Activated naive CD4-positive, alpha-beta T cell treated with anti-CD3 and anti-CD28 coated beads for 36 hours (primary cell): ENCODE measurements at regions of chr1 and their contacts with region 1.

Region 1: DNA sequence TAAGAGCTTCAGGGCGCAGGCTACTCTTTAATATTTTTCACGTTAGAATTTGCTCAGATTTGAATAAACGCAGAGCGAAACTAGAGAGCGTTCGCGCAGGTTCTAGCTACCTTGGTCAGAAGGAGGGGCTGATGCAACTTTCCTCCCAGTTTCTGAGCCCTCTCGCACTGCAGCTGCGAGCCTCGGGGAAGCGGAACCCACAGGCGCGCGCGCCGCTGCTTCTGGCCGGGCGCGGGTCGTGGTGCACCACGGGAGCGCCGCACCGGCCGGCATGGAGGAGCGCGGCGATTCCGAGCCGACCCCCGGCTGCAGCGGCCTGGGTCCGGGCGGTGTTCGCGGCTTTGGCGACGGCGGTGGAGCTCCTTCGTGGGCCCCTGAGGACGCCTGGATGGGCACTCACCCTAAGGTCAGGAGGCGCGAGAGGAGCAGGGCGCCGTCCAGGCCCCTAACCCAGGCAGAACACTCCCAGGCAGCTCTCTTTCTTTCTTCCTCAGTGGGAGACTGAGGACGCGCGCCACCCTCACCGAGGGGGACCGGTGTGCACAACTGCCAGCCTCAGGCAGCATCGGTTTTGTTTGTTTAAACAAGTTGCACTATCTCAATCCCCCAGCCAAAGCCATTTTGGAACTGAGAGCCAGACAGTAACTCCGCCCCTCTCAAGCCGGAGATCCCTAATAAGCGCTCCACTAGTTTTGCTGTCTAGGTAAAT is at the start of gene TSEN15:
- DNase-seq: peak; percentile 84
- H3K4me3 Mint-ChIP-seq: peak within 1 kb of the TSS; percentile 96
- H3K27ac Mint-ChIP-seq: peak within 1 kb of the TSS; percentile 96
- H3K4me1 Mint-ChIP-seq: peaks cover 34% of the 10 kb centered on the region
- H3K27me3 Mint-ChIP-seq: peaks cover 5% of the 10 kb centered on the region
- total RNA-seq, gene TSEN15: 52.6 to 57.6 TPM

Region 2: DNA sequence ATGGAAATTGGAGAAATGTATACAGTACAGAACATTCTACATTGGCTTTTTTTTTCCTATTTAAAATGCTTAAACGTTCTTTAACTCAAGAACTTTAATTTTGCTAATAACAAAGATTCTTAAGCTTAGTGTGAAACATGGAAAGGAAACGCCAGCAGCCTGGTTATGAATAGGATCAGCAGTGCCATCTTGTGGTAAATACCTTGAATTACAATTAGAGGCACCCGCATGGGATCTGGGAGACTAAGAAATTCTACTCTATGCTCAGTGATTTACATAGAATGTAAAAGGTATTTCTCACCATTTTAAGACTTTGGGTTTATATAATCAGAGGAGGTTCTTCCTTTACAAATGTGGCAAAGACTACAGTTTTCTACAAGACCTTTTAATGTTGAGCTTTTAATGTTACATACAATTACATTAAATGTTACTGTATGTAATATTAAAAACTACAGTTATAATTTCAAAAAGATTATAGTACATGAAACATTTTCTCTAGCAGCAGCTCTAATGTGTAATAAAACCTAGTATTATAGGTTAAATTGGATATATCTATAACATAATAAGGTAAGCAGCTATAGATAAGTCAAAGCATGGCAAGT is 366.4 kb before region 1 on chr1:
- CTCF ChIA-PET with region 1: interaction called, 3 read pairs
- intact Hi-C with region 1: loop called (anchors 10 kb)
- DNase-seq: peak; percentile 41
- H3K4me3 Mint-ChIP-seq: no peak overlapping the region
- H3K27ac Mint-ChIP-seq: no peak overlapping the region
- H3K4me1 Mint-ChIP-seq: peaks cover 8% of the 10 kb centered on the region
- H3K27me3 Mint-ChIP-seq: no peaks in the 10 kb centered on the region

Region 3: DNA sequence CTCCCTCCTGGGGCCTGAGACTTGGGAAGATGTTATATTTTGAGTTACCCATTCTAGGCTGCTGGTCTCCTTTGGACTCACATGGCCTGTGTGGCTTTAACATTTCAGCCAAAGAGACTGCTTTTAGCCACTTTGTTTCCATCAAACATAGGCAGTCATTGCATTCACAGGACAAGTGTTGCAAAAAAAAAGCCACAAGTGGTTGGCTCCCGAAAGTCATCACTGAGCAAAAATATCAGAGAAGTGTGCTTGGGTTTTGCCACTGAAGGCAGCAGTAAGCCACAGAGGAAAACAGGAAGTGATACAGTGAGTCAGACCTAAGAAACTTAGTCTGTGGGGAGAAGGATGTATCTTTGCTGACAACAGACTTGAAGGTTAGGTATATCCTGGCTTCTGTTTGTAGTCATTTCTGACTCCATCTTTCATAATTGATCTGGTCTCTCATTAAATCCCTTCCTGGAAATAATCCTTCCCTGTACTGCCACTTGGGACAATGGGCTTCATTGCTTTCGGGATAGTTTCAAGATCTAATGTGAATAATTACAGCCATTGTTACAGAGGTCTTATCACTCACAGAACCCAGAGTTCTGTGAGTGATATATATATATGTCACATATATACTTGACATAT is 95.0 kb before region 1 on chr1:
- CTCF ChIA-PET with region 1: no interaction called
- intact Hi-C with region 1: loop called (anchors 1 kb)
- DNase-seq: peak; percentile 71
- H3K4me3 Mint-ChIP-seq: no peak overlapping the region
- H3K27ac Mint-ChIP-seq: peak overlapping the region; percentile 86
- H3K4me1 Mint-ChIP-seq: no peaks in the 10 kb centered on the region
- H3K27me3 Mint-ChIP-seq: no peaks in the 10 kb centered on the region

Region 4: DNA sequence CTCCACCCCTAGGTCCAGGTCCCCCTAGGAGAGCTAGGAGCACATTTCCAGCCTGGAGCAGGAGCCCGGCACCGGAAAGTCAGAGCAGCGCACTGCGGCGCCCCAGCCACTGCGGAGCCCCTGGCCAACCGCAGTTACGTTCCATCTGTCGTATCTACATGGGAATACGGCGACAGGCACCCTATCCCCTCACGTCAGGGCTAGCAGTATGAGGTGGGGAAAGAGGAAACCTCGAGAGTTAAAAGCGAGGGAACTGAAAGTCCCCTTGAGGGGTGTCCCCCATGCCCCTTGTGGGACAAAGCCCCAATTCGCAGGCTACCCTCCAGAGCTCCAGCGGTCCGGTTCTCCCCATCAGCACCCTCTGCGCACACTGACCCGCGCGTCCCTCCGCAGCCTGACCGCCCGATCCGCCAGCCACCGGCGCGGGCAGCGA is 15.1 kb before region 1 on chr1:
- CTCF ChIA-PET with region 1: no interaction called
- intact Hi-C with region 1: loop called (anchors 1 kb)
- DNase-seq: peak; percentile 23
- H3K4me3 Mint-ChIP-seq: peak overlapping the region; percentile 58
- H3K27ac Mint-ChIP-seq: no peak overlapping the region
- H3K4me1 Mint-ChIP-seq: peaks cover 15% of the 10 kb centered on the region
- H3K27me3 Mint-ChIP-seq: peaks cover 68% of the 10 kb centered on the region

Region 5: DNA sequence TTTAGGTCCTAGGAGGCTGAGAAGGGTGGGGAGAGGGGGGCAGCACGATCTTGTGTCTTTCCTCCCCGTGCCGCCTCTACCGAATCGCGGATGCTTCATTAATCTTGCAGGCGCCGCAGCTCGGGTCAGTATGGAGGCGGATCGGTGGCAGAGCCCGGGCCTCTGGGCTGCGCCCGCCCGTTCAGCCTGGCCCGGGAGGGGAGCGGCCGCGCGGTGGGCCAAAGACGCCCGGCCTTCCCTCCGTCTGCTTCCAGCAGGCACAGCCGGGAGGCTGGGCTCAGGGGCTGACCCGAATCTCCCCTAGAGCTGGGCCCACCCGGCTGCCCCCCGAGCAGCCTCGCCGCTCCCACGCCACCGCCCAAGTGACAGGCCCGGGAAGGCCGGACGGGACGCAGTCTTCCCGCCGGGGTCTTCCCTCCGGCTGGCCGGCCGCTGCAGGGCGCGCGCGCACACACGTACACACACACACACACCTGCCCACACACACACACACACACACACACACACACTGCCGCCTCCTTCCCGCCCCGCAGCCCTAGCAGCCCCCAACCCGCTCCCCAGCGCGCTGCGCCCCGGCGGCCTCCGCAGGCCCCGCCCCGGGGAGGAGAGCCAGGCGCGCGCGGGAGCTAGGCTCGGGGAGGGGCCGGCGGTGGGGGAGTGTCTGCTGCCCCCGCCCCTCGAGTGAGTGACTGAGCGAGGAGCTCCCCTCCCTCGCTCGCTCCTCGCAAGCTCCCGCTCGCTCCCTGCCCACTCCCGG is 334.9 kb after region 1 on chr1 and contains the start of gene C1orf21:
- CTCF ChIA-PET with region 1: no interaction called
- intact Hi-C with region 1: loop called (anchors 5 kb)
- DNase-seq: peak; percentile 80
- H3K4me3 Mint-ChIP-seq: peak within 1 kb of the TSS; percentile 78
- H3K27ac Mint-ChIP-seq: no peak within 1 kb of the TSS
- H3K4me1 Mint-ChIP-seq: peaks cover 14% of the 10 kb centered on the region
- H3K27me3 Mint-ChIP-seq: peaks cover 59% of the 10 kb centered on the region
- total RNA-seq, gene C1orf21: 1.2 to 1.4 TPM

Region 6: GRCh38 chr1:184494929-184495328 is 443.3 kb after region 1 on chr1:
- CTCF ChIA-PET with region 1: no interaction called
- intact Hi-C with region 1: loop called (anchors 10 kb)
- DNase-seq: no peak
- H3K4me3 Mint-ChIP-seq: no peak overlapping the region
- H3K27ac Mint-ChIP-seq: no peak overlapping the region
- H3K4me1 Mint-ChIP-seq: peaks cover 14% of the 10 kb centered on the region
- H3K27me3 Mint-ChIP-seq: no peaks in the 10 kb centered on the region

Region 7: DNA sequence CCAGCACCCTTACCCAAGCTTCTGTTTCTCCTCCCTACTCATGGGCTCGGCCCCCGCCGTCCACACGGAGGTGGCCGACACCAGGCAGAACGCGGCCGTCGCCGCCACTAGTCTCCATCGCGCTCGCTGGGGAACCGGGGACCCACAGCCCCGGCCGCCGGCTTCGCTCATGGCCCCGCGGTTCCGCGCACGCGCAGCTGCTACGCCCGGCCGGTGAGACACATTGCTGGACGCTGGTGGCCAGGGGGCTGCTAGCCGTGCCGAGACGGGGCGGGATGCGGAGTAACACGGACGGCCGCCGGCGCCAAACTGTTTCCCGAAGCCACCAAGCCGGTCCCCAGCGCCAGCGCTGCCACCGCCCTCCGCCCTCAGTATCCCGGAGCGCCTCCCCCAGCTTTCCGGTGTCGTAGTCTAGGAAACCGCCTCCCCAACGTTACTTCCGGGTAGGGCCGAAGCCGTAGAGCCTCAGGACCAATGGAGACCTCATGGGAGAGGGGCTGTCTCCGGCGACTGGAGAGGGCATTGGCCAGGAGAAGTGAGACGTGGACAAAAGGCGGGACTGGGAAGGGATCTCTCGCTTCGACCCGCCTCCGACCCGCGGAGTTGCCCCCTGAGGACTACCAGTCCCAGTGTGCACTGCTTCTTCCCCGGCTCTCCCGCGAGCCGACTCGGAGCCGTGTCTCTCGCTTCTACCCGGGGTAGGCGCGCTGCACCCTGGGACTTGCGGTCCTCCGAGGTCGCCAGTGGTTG is 703.0 kb after region 1 on chr1 and contains the start of gene EDEM3:
- CTCF ChIA-PET with region 1: no interaction called
- intact Hi-C with region 1: loop called (anchors 2 kb)
- DNase-seq: peak; percentile 98
- H3K4me3 Mint-ChIP-seq: peak within 1 kb of the TSS; percentile 88
- H3K27ac Mint-ChIP-seq: peak within 1 kb of the TSS; percentile 88
- H3K4me1 Mint-ChIP-seq: peaks cover 36% of the 10 kb centered on the region
- H3K27me3 Mint-ChIP-seq: no peaks in the 10 kb centered on the region
- total RNA-seq, gene EDEM3: 9.9 to 10.5 TPM